Heart left ventricle (tissue), 16 donors: ENCODE measurements at regions of chr5 and their contacts with region 1.

Region 1: DNA sequence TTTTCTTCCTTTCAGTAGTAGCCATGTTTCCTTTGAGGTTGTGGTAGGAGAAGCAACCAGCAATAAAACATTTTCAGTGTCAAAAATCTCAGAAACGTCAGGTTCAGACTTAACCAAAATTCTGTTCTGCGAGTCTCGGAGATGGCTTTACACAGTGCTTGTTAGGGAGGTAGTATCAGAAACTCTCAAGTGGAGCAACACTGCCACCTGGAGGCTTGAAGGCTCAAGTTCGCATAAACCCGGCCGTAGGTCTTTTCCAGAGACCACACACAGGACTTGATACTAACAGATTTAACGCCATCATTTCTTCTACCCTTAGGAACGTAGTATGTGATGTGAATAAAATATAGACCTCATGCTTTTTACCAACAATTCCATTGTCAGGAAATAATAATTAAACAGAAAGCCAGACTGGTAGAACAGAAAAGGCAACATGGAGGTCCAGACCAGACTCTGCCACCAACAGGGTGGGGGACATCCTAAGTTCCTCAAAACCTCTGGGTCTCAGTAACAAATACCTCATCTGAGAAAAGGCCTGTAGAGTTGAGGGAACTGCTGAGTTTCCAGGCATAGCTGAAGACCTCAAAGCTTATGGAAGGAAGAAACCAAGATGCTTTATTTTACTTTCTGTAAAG is 8.5 kb downstream of the PTGER4 start:
- DNase-seq: peak; percentile 76 to 88 (median 82)
- ATAC-seq: peak; percentile 84 to 92 (median 92)
- H3K4me3 ChIP-seq: peak overlapping the region in 8 of 12 donors; percentile 58 to 96 (median 86)
- H3K27ac ChIP-seq: peak overlapping the region in 10 of 12 donors; percentile 1 to 97 (median 54)
- H3K4me1 ChIP-seq: peaks cover 0 to 70% (median 22%) of the 10 kb centered on the region in 12 donors
- H3K27me3 ChIP-seq: no peaks in the 10 kb centered on the region
- CTCF ChIP-seq: peak; percentile 78 to 94 (median 86)
- POLR2A ChIP-seq: no peak

Region 2: GRCh38 chr5:39578887-39579497 is 1109.3 kb before region 1 on chr5:
- intact Hi-C with region 1: loop called (anchors 2 to 10 kb)
- DNase-seq: no peak
- ATAC-seq: no peak
- H3K4me3 ChIP-seq: no peak overlapping the region
- H3K27ac ChIP-seq: no peak overlapping the region
- H3K4me1 ChIP-seq: peaks cover 0 to 22% (median 0%) of the 10 kb centered on the region in 12 donors
- H3K27me3 ChIP-seq: no peaks in the 10 kb centered on the region
- CTCF ChIP-seq: peak; percentile 60 to 84 (median 70)
- POLR2A ChIP-seq: no peak

Region 3: DNA sequence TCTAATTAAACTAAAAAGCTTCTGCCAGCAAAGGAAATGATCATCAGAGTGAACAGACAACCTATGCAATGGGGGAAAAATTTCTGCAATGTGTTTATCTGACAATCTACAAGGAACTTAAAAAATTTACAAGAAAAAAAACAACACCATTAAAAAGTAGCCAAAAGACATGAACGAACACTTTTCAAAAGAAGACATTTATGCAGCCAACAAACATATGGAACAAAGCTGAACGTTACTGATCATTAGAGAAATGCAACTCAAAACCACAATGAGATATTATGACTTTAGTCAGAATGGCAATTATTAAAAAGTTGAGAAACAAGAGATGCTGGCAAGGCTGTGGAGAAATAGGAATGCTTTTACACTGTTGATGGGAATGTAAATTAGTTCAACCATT is 733.1 kb before region 1 on chr5:
- intact Hi-C with region 1: loop called in 2 of 10 experiments (anchors 5 kb)
- DNase-seq: no peak
- ATAC-seq: no peak
- H3K4me3 ChIP-seq: no peak overlapping the region
- H3K27ac ChIP-seq: no peak overlapping the region
- H3K4me1 ChIP-seq: no peaks in the 10 kb centered on the region
- H3K27me3 ChIP-seq: no peaks in the 10 kb centered on the region
- CTCF ChIP-seq: no peak
- POLR2A ChIP-seq: no peak

Region 4: DNA sequence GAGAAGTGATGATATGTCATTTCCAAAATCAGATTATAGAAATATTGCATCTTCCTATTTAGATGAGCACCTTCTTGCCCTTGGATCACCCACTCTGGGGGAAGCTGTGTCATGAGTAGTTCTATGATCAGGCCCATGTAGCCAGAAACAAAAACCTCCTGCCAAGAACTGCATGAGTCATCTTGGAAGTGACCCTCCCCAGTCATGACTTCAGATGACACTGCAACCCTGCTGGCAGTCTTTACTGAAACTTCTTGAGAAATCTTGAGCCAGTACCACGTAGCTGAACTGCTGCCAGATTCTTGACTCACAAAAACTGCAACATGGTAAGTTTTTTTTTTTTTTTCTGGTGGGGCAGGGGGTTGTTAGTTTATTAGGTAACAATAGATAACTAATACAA is 448.1 kb before region 1 on chr5:
- intact Hi-C with region 1: loop called in 1 of 10 experiments (anchors 10 kb)
- DNase-seq: no peak
- ATAC-seq: no peak
- H3K4me3 ChIP-seq: no peak overlapping the region
- H3K27ac ChIP-seq: no peak overlapping the region
- H3K4me1 ChIP-seq: no peaks in the 10 kb centered on the region
- H3K27me3 ChIP-seq: no peaks in the 10 kb centered on the region
- CTCF ChIP-seq: no peak
- POLR2A ChIP-seq: no peak

Region 5: GRCh38 chr5:40428126-40428525 is 260.1 kb before region 1 on chr5:
- intact Hi-C with region 1: loop called in 2 of 10 experiments (anchors 10 kb)
- DNase-seq: peak in 2 of 5 donors; percentile 64 to 70
- ATAC-seq: peak in 3 of 4 donors; percentile 37 to 84 (median 63)
- H3K4me3 ChIP-seq: no peak overlapping the region
- H3K27ac ChIP-seq: no peak overlapping the region
- H3K4me1 ChIP-seq: peaks cover 0 to 28% (median 12%) of the 10 kb centered on the region in 12 donors
- H3K27me3 ChIP-seq: no peaks in the 10 kb centered on the region
- CTCF ChIP-seq: no peak
- POLR2A ChIP-seq: no peak

Region 6: GRCh38 chr5:40570408-40571129 is 117.7 kb before region 1 on chr5:
- intact Hi-C with region 1: loop called in 2 of 10 experiments (anchors 5 to 10 kb)
- DNase-seq: no peak
- ATAC-seq: peak in 3 of 4 donors; percentile 42 to 81 (median 68)
- H3K4me3 ChIP-seq: no peak overlapping the region
- H3K27ac ChIP-seq: peak overlapping the region in 8 of 12 donors; percentile 5 to 80 (median 58)
- H3K4me1 ChIP-seq: peaks cover 0 to 21% (median 0%) of the 10 kb centered on the region in 12 donors
- H3K27me3 ChIP-seq: no peaks in the 10 kb centered on the region
- CTCF ChIP-seq: no peak
- POLR2A ChIP-seq: no peak